ENCODE measurements at regions of chr2 and their contacts with region 1.

Region 1: GRCh38 chr2:204325468-204325867 is 219.8 kb upstream of the PARD3B start:
- DNase-seq: peak in 1 of 3 donors; percentile 74
- ATAC-seq: peak; percentile 91
- H3K4me3 ChIP-seq: no peak overlapping the region
- H3K4me1 ChIP-seq: no peaks in the 10 kb centered on the region
- CTCF ChIP-seq: peak; percentile 34

Region 2: DNA sequence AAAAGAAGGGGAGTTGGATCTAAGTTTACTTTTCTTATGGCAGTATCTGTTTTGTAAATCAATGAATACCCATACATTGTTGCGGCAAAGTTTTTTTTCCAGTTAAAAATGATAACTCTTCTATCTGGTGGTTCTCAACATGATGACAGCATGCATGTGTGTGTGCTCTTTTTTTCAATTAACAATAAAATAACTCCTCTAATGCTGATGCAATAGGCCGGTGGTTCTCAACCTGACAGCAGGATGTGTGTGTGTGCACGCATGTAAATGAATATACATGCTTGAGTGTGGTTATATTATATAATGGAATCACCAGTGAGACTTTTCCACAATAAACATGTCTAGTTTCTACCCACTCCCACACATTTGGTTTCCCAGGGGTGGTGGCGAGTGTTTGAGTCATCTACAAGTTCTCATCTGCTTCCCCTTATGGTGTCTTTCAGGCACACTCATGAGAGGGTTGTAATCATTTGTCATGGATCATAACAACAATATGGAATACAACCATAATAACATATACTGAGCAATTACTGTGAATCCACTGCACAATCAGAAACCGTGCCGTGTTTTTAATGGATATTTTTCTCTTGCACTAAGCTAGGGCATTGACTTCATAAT is 251.0 kb after region 1 on chr2:
- intact Hi-C with region 1: no loop called
- DNase-seq: no peak
- ATAC-seq: no peak
- H3K4me3 ChIP-seq: no peak overlapping the region
- H3K4me1 ChIP-seq: no peaks in the 10 kb centered on the region
- CTCF ChIP-seq: no peak

Region 3: DNA sequence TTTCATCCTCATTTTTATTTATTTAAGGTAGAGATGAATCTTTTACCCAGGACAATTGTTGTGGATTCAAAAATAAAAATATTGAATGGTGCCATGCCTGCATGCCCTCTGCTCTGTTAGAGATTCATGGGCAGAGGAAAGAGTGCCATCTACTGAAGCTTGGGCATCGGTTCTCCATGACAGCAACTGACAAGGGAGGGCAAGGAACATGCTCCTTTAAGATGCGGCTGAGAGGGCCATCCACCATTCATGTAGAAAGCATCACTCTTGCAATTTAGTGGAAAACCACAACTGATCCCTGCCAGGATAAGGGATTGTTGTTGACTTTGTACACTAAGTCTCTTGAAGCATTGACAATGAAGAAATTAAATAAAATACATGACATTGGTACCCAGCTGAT is 299.7 kb after region 1 on chr2:
- intact Hi-C with region 1: loop called in 1 of 2 experiments (anchors 5 kb)
- DNase-seq: peak in 1 of 3 donors; percentile 44
- ATAC-seq: peak; percentile 71
- H3K4me3 ChIP-seq: no peak overlapping the region
- H3K4me1 ChIP-seq: no peaks in the 10 kb centered on the region
- CTCF ChIP-seq: no peak

Region 4: DNA sequence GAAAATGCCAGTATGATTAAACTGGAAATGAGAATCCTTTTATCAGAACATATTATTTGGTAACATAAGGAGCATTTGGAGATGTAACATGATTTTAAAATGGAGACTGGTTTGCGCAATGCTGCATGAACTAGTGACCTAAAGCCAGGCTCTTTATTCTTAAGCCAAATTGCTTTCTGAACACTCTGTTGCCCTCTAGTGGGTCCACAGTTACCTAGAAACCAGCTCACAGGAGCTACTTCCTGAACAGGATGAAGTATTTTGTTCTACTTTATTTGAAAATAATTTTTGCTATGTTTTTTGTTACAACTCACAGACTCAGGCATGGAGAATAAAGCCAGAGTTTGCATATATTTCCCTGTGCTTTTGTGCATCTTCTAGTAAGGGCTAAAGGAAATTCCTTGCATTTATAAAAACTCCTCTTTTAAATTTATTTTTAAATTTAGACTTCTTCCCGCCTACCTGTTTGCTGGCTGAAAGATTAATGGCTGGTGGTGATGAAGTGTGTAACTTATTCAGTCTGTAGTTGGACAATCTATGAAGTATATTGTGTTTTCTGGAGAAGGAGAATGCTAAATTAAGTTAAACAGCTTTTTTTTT is 366.5 kb after region 1 on chr2:
- intact Hi-C with region 1: loop called (anchors 5 to 10 kb)
- DNase-seq: peak in 1 of 3 donors; percentile 81
- ATAC-seq: peak; percentile 92
- H3K4me3 ChIP-seq: no peak overlapping the region
- H3K4me1 ChIP-seq: no peaks in the 10 kb centered on the region
- CTCF ChIP-seq: peak; percentile 56